ENCODE measurements at regions of chr18 and their contacts with region 1.

Region 1: DNA sequence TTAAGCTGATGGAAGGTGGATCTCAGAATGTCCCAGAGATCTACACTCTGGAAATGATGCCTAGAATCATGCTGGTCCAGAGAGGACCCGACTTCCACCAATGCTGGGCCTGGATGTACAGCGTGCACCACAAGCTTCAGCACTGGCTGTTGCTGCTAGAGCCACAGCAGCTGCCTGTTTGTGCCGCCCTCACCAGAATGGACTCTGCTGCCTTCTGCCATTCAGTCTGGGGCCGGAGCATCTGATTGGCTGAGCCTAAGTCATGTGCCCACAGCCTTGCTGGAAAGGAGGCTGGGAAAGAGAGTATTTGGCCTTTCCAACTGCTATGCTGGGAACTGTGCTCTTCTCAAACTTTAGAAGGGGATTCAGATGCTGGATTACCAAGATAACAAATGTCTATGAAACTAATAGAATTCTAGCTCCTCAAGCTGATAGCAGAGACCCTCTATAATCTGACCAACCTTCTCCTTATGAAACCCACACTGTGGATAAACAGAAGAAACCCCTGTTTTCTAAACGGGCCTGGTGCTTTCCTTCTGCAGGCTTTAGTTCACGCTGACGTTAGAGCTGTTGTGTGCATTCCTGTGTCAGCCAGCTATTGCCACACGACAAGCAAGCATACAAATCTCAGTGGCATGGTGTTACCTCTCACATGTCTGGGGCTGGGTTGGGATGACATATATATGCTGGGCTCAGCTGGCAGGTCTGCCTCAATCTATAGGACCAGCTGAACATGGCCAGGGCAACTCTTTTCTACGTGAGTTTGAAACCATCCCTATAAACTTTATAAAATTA is 4.1 kb upstream of the LOXHD1 start:
- DNase-seq: no peak
- H3K4me3 Mint-ChIP-seq: no peak overlapping the region
- H3K27ac Mint-ChIP-seq: no peak overlapping the region
- H3K4me1 Mint-ChIP-seq: no peaks in the 10 kb centered on the region
- H3K27me3 Mint-ChIP-seq: no peaks in the 10 kb centered on the region

Region 2: GRCh38 chr18:46141199-46141598 is 520.0 kb before region 1 on chr18:
- CTCF ChIA-PET with region 1: interaction called, 135 read pairs
- POLR2A ChIA-PET with region 1: no interaction called
- intact Hi-C with region 1: no loop called
- DNase-seq: no peak
- H3K4me3 Mint-ChIP-seq: no peak overlapping the region
- H3K27ac Mint-ChIP-seq: no peak overlapping the region
- H3K4me1 Mint-ChIP-seq: no peaks in the 10 kb centered on the region
- H3K27me3 Mint-ChIP-seq: no peaks in the 10 kb centered on the region

Region 3: DNA sequence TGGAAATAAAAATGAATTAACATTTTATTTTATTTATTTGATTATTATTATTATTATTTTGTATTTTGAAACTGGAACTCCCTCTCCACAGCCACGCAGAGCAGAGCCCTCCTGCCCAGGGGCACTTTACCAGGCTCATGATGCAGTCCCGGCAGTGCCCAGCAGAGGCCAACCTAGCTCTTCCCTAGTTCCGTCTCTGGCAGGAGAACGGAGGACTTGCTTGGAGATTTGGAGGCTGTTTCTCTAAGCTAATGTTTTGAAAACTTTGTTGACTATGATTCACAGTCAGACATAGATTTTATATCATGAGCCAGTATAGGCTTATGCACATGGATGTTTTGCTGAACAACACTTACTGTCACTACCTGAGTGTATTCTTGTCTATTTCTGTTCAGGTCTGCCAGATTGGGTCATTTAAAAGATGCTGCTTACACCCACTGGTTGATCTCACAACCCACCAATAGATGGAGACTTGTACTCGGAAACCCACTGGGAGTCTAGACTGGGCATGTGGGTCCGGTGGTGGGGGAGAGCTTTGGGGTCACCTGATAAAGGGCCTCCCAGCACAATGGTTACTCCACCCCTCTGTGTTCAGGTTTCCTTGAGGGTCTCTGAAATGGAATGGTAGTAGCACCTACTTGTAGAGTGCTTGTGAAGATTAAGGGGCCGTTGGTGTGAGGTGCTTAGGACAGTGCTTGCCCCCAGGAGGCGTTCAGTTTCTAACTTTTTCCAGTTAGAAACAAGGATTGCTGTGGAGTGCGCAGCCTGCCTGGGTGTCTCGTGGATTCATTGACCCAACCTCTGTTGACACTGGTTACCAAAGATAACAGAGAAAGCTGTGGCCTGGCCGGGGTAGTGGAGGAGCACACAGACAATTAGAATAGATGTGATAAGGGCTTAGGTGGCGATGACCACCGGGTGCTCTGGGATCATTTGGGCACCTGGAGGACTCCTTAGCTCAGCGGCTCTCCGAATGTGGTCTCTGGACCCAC is 379.7 kb before region 1 on chr18:
- CTCF ChIA-PET with region 1: interaction called, 128 read pairs
- POLR2A ChIA-PET with region 1: no interaction called
- intact Hi-C with region 1: loop called (anchors 1 kb)
- DNase-seq: peak; percentile 77
- H3K4me3 Mint-ChIP-seq: no peak overlapping the region
- H3K27ac Mint-ChIP-seq: no peak overlapping the region
- H3K4me1 Mint-ChIP-seq: peaks cover 17% of the 10 kb centered on the region
- H3K27me3 Mint-ChIP-seq: no peaks in the 10 kb centered on the region

Region 4: GRCh38 chr18:46615720-46616119 is 45.4 kb before region 1 on chr18:
- CTCF ChIA-PET with region 1: no interaction called
- POLR2A ChIA-PET with region 1: no interaction called
- intact Hi-C with region 1: no loop called
- DNase-seq: no peak
- H3K4me3 Mint-ChIP-seq: no peak overlapping the region
- H3K27ac Mint-ChIP-seq: no peak overlapping the region
- H3K4me1 Mint-ChIP-seq: no peaks in the 10 kb centered on the region
- H3K27me3 Mint-ChIP-seq: peaks cover 5% of the 10 kb centered on the region

Region 5: GRCh38 chr18:46649071-46649862 is 11.9 kb before region 1 on chr18:
- CTCF ChIA-PET with region 1: interaction called, 21 read pairs
- POLR2A ChIA-PET with region 1: no interaction called
- intact Hi-C with region 1: no loop called
- DNase-seq: no peak
- H3K4me3 Mint-ChIP-seq: no peak overlapping the region
- H3K27ac Mint-ChIP-seq: no peak overlapping the region
- H3K4me1 Mint-ChIP-seq: no peaks in the 10 kb centered on the region
- H3K27me3 Mint-ChIP-seq: peaks cover 2% of the 10 kb centered on the region

Region 6: DNA sequence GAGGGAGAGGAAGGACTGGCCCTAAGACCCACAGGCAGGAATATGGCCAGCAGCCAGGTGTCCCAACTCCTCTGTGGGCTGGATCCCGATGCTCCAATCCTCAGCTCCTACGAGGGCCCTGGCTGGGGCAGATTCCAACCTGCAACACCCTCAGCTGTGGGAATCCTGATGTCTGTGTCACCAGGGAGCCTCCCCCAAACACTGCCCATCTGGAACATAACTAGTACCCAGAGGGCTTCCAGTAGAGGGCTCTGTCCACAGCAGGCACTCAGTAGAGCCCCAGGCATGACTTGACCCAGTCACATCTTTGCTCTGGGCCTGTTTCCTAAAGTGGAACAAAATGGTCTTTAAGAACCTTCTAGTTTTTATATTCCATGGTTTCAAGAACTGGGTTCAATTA is 16.5 kb after region 1 on chr18:
- CTCF ChIA-PET with region 1: interaction called, 13 read pairs
- POLR2A ChIA-PET with region 1: no interaction called
- intact Hi-C with region 1: no loop called
- DNase-seq: no peak
- H3K4me3 Mint-ChIP-seq: no peak overlapping the region
- H3K27ac Mint-ChIP-seq: no peak overlapping the region
- H3K4me1 Mint-ChIP-seq: peaks cover 4% of the 10 kb centered on the region
- H3K27me3 Mint-ChIP-seq: peaks cover 2% of the 10 kb centered on the region